Calu3 (cell line): ENCODE measurements at regions of chr11 and their contacts with region 1.

Region 1: GRCh38 chr11:23112987-23113886 is 253.0 kb upstream of the CCDC179 start:
- DNase-seq: peak; percentile 73
- H3K4me3 Mint-ChIP-seq: peak overlapping the region; percentile 37
- H3K27ac Mint-ChIP-seq: peak overlapping the region; percentile 26
- H3K4me1 Mint-ChIP-seq: peaks cover 28% of the 10 kb centered on the region
- H3K27me3 Mint-ChIP-seq: no peaks in the 10 kb centered on the region
- CTCF ChIP-seq: peak; percentile 20

Region 2: DNA sequence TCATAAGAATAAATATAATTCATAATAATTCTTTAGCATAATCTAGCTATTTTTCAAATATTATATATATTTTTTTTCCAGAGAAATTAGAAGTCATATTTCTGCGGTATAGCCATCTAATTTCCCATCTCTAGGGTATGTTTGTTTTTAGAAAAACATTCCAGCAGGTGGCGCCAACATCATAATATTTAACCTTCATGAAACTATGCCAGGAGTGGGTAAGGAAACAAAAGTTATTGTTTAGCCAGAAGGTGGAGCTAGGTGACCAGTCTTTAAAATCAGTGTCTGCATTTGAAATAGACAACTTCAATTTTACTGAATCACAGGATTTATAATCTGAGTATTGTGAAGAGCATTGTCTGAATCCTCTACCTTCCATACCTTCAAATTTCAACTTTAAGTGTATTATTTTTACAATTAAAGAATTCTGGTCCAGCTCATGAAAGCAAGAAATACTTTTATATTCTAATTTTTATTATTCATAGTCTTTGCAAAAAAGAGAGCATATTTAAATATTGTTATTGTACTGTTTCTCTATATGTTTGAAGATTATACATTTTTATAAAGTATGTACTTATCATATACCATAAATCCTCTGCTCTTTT is 237.3 kb before region 1 on chr11:
- CTCF ChIA-PET with region 1: interaction called, 12 read pairs
- intact Hi-C with region 1: loop called (anchors 1 kb)
- DNase-seq: peak; percentile 72
- H3K4me3 Mint-ChIP-seq: no peak overlapping the region
- H3K27ac Mint-ChIP-seq: no peak overlapping the region
- H3K4me1 Mint-ChIP-seq: no peaks in the 10 kb centered on the region
- H3K27me3 Mint-ChIP-seq: no peaks in the 10 kb centered on the region
- CTCF ChIP-seq: peak; percentile 74

Region 3: GRCh38 chr11:23021287-23021863 is 91.9 kb before region 1 on chr11:
- CTCF ChIA-PET with region 1: interaction called, 10 read pairs
- intact Hi-C with region 1: loop called (anchors 5 kb)
- DNase-seq: peak; percentile 34
- H3K4me3 Mint-ChIP-seq: no peak overlapping the region
- H3K27ac Mint-ChIP-seq: no peak overlapping the region
- H3K4me1 Mint-ChIP-seq: no peaks in the 10 kb centered on the region
- H3K27me3 Mint-ChIP-seq: no peaks in the 10 kb centered on the region
- CTCF ChIP-seq: peak; percentile 64

Region 4: GRCh38 chr11:23151819-23152218 is 38.6 kb after region 1 on chr11:
- CTCF ChIA-PET with region 1: no interaction called
- intact Hi-C with region 1: no loop called
- DNase-seq: no peak
- H3K4me3 Mint-ChIP-seq: no peak overlapping the region
- H3K27ac Mint-ChIP-seq: no peak overlapping the region
- H3K4me1 Mint-ChIP-seq: no peaks in the 10 kb centered on the region
- H3K27me3 Mint-ChIP-seq: no peaks in the 10 kb centered on the region
- CTCF ChIP-seq: no peak

Region 5: GRCh38 chr11:23554000-23554399 is 440.8 kb after region 1 on chr11:
- CTCF ChIA-PET with region 1: no interaction called
- intact Hi-C with region 1: loop called (anchors 1 kb)
- DNase-seq: no peak
- H3K4me3 Mint-ChIP-seq: no peak overlapping the region
- H3K27ac Mint-ChIP-seq: no peak overlapping the region
- H3K4me1 Mint-ChIP-seq: no peaks in the 10 kb centered on the region
- H3K27me3 Mint-ChIP-seq: no peaks in the 10 kb centered on the region
- CTCF ChIP-seq: no peak

Region 6: DNA sequence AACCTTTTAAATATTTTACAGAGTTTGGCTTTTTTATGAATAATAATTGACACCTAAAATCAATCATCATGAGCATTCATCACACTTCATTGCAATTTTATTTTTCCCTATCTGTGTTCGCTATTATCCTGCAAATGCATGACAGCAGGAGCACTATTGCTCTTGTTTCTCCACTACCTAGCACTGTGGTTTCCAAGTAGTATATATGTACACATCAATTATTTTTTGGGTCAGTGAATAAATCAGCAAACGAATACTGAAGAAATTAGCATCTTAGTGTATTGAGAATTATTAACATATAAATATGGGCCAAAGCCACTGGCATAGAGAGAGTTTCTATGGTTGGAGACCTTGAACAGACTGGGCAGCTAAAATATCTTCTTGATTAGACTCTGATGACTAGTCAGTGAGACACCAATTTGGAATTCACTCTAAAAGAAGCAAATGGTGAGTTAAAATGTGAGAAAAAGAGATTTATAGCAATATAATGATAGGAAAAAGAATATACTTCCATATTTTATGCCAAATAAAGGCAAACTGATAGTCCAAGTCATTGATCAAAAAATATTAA is 652.5 kb after region 1 on chr11:
- CTCF ChIA-PET with region 1: no interaction called
- intact Hi-C with region 1: no loop called
- DNase-seq: no peak
- H3K4me3 Mint-ChIP-seq: no peak overlapping the region
- H3K27ac Mint-ChIP-seq: no peak overlapping the region
- H3K4me1 Mint-ChIP-seq: no peaks in the 10 kb centered on the region
- H3K27me3 Mint-ChIP-seq: no peaks in the 10 kb centered on the region
- CTCF ChIP-seq: no peak

Region 7: DNA sequence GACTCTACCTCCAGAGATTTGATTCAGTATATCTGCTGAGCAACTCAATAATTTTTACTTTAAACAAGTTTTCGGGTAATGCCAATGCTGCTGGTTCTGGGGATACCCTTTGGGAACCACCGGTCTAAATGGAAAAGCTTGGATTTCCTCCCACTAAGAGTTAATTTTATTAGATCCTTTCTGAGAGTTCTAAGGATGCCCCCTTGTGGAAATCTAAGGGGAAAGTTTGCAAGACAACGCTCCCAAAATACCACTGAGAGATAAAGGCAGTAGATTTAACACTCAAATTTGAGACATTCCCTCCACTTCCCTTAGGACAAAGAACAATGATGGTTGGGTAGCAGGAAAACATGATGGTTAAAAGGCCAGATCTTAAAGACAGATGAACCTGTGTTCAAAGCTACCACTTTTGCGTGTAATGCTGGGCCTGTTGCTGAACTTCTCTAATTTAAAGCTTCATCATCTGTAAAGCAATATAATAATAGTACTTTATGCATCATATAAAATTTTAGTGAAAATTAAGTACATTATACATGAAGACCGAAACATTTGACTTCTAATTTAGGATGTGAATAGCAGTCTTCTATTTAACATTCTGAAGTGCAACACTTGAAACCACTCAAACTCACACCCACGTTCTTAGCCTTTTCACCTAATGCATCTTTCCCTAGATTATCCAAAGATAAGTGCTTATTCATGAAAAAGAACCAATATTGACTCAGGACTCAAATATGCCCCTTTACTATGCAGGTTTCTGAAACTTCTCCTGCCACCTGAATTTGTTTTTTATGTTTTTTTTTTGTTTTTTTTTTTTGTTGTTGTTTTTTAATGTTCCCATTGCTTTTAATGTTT is 1273.5 kb after region 1 on chr11:
- CTCF ChIA-PET with region 1: interaction called, 5 read pairs
- intact Hi-C with region 1: loop called (anchors 5 kb)
- DNase-seq: peak; percentile 7
- H3K4me3 Mint-ChIP-seq: no peak overlapping the region
- H3K27ac Mint-ChIP-seq: no peak overlapping the region
- H3K4me1 Mint-ChIP-seq: no peaks in the 10 kb centered on the region
- H3K27me3 Mint-ChIP-seq: no peaks in the 10 kb centered on the region
- CTCF ChIP-seq: peak; percentile 42